ENCODE measurements at regions of chr3 and their contacts with region 1.

Region 1: GRCh38 chr3:150870396-150870795 is 34.8 kb downstream of the MINDY4B start:
- DNase-seq: no peak
- ATAC-seq: no peak
- H3K4me3 Mint-ChIP-seq: no peak overlapping the region
- H3K27ac Mint-ChIP-seq: no peak overlapping the region
- H3K4me1 Mint-ChIP-seq: peaks cover under 1% of the 10 kb centered on the region
- H3K27me3 Mint-ChIP-seq: peaks cover 4% of the 10 kb centered on the region
- CTCF ChIP-seq: no peak

Region 2: GRCh38 chr3:150588027-150588830 is 282.2 kb before region 1 on chr3:
- CTCF ChIA-PET with region 1: no interaction called
- POLR2A ChIA-PET with region 1: no interaction called
- intact Hi-C with region 1: loop called (anchors 2 kb)
- DNase-seq: no peak
- ATAC-seq: no peak
- H3K4me3 Mint-ChIP-seq: no peak overlapping the region
- H3K27ac Mint-ChIP-seq: peak overlapping the region; percentile 11
- H3K4me1 Mint-ChIP-seq: no peaks in the 10 kb centered on the region
- H3K27me3 Mint-ChIP-seq: no peaks in the 10 kb centered on the region
- CTCF ChIP-seq: no peak

Measured in activated B cell treated with CpG ODN at 0.5 μM for 24 hours (primary cell).